ENCODE measurements at regions of chr1 and their contacts with region 1.

Region 1: DNA sequence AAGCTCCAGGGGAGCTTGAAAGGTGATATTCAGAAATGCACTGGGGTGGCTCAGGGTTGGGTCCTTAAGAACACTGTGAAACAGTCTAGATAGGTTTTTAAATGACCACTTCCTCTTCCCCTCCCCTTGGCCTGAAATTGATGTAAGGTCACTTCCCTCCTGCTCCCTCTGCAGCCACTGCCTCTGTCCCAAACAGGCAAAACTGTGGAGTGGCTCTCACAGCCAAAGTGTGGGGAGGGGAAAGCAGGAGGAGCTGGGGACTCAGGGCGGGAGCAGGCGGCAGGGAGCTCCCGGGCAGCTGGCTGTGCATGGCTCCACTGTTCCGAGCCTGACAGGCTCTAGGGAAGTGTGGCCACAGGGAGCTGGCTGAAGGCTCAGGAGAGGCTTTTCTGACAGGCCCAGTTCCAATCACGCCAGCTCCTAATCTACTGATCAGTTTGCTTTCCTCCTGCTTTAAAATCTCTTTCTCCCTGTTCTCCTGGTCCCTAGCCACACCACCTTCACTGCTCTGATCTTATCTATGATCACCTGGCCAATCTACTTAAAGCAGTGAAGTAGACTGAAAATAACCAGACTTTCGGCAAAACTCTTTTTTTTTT is 5.1 kb upstream of the CSRP1 start:
- DNase-seq: no peak
- H3K4me3 Mint-ChIP-seq: no peak overlapping the region
- H3K27ac Mint-ChIP-seq: no peak overlapping the region
- H3K4me1 Mint-ChIP-seq: peaks cover 42% of the 10 kb centered on the region
- H3K27me3 Mint-ChIP-seq: no peaks in the 10 kb centered on the region

Region 2: GRCh38 chr1:201447911-201448871 is 63.8 kb before region 1 on chr1:
- CTCF ChIA-PET with region 1: interaction called, 140 read pairs
- POLR2A ChIA-PET with region 1: interaction called, 12 read pairs
- DNase-seq: peak; percentile 78
- H3K4me3 Mint-ChIP-seq: no peak overlapping the region
- H3K27ac Mint-ChIP-seq: no peak overlapping the region
- H3K4me1 Mint-ChIP-seq: peaks cover 37% of the 10 kb centered on the region
- H3K27me3 Mint-ChIP-seq: peaks cover 25% of the 10 kb centered on the region

Region 3: GRCh38 chr1:201468844-201469511 is 43.1 kb before region 1 on chr1 and contains the start of gene PHLDA3:
- CTCF ChIA-PET with region 1: interaction called, 13 read pairs
- POLR2A ChIA-PET with region 1: interaction called, 11 read pairs
- DNase-seq: peak; percentile 69
- H3K4me3 Mint-ChIP-seq: peak within 1 kb of the TSS; percentile 77
- H3K27ac Mint-ChIP-seq: peak within 1 kb of the TSS; percentile 45
- H3K4me1 Mint-ChIP-seq: peaks cover 21% of the 10 kb centered on the region
- H3K27me3 Mint-ChIP-seq: peaks cover 37% of the 10 kb centered on the region
- total RNA-seq, gene PHLDA3: 9.0 to 11.4 TPM

Region 4: DNA sequence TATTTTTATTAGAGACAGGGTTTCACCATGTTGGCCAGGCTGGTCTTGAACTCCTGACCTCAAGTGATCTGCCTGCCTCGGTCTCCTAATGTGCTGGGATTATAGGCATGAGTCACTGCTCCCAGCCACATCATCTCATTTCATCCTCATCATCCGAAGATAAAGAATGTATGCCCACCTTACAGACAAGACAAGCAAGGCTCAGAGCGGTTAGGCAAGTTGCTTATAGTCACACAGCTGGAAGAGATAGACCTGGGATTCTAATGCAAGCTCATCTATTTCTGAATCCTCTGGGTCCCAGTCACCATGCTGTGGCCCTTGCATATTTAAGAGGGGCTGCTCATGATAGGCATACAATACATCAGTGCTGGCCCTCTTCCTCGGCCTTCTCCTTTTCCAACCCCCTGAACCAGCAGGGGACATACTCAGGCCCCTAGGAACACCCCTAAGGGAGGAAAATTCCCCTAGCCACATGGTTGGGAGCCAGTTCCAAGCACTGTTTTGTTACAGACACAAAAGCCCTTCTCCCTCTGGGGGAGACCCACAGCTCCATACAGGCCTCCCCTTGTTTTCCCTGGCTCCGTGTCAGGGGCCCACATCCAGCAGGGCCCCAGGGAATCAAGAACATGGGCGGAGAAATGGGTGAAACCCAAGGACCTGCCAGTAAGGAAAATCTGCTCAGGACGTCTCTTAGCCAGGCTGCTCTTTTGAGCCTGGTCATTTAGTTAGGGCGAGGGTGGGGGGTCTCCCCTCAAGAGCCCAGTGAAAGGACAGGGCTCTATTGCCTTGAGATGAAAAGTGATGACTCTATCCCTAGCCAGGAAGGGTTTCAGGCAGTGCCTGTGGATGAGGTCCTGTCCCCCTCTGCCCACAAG is 12.0 kb before region 1 on chr1:
- CTCF ChIA-PET with region 1: interaction called, 43 read pairs
- POLR2A ChIA-PET with region 1: no interaction called
- DNase-seq: no peak
- H3K4me3 Mint-ChIP-seq: no peak overlapping the region
- H3K27ac Mint-ChIP-seq: no peak overlapping the region
- H3K4me1 Mint-ChIP-seq: peaks cover 19% of the 10 kb centered on the region
- H3K27me3 Mint-ChIP-seq: no peaks in the 10 kb centered on the region

Region 5: GRCh38 chr1:201530741-201531531 is 18.9 kb after region 1 on chr1:
- CTCF ChIA-PET with region 1: interaction called, 42 read pairs
- POLR2A ChIA-PET with region 1: interaction called, 3 read pairs
- DNase-seq: peak; percentile 37
- H3K4me3 Mint-ChIP-seq: no peak overlapping the region
- H3K27ac Mint-ChIP-seq: no peak overlapping the region
- H3K4me1 Mint-ChIP-seq: peaks cover 3% of the 10 kb centered on the region
- H3K27me3 Mint-ChIP-seq: peaks cover 4% of the 10 kb centered on the region

Measured in activated CD4-positive, alpha-beta memory T cell treated with anti-CD3 and anti-CD28 coated beads, Interleukin-2, amount 10 ng/mL, durations not matched to agents 7 days and 5 days (primary cell).